ENCODE measurements at regions of chr7 and their contacts with region 1.

Region 1: GRCh38 chr7:22103255-22103969 is 157.7 kb upstream of the CDCA7L start:
- DNase-seq: peak; percentile 96

Region 2: GRCh38 chr7:22193450-22193983 is 90.1 kb after region 1 on chr7:
- in situ Hi-C with region 1: no loop called
- DNase-seq: no peak

Region 3: DNA sequence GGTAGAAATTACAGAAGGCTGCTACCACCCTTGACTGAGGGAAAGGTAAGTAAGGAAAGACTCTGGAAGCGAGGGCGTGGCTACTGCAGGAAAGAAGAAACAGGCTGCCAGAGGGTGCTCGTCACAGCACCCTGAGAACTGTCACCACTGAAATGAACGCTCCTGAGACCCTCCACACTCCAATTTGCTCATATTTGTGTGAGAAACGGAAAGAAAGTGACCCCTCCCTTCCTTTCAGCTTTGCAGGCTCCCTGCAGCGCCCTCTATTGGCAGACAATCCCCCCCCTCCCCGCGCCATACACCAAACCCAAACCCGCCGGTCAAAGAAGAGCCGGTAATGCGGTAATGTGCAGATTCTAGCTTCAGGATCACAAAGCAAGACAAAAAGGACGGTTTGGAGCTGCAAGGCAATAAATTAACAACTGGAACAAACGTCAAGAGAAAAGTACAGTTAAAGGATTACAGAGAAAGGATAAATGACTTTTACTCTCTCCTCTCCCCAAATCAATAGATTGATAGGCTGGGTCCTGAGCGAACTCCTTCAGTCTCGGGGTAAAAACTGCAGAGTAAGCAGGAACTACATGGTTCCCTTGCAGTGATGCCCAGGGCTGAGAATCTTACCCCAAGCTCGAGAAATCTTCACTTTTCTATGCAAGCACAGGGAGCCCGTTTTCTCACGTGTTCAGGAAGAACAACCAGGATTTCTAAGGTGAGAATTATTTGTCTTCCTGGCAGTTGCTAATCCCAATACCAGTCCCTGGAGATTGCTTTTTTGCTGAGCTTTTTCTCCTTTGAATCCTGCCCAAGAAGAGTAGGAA is 348.9 kb after region 1 on chr7:
- in situ Hi-C with region 1: loop called (anchors 25 kb)
- DNase-seq: no peak